Prostate gland (tissue), 2 donors: ENCODE measurements at regions of chr5 and their contacts with region 1.

Region 1: GRCh38 chr5:90529194-90529938 is at the start of gene LYSMD3:
- DNase-seq: peak; percentile 98
- H3K4me3 ChIP-seq: peak within 1 kb of the TSS; percentile 72 to 86
- H3K27ac ChIP-seq: peak within 1 kb of the TSS; percentile 89 to 92
- H3K4me1 ChIP-seq: no peaks in the 10 kb centered on the region
- H3K27me3 ChIP-seq: no peaks in the 10 kb centered on the region
- CTCF ChIP-seq: no peak
- POLR2A ChIP-seq: peak; percentile 95
- total RNA-seq, gene LYSMD3: 11.8 to 18.0 TPM

Region 2: DNA sequence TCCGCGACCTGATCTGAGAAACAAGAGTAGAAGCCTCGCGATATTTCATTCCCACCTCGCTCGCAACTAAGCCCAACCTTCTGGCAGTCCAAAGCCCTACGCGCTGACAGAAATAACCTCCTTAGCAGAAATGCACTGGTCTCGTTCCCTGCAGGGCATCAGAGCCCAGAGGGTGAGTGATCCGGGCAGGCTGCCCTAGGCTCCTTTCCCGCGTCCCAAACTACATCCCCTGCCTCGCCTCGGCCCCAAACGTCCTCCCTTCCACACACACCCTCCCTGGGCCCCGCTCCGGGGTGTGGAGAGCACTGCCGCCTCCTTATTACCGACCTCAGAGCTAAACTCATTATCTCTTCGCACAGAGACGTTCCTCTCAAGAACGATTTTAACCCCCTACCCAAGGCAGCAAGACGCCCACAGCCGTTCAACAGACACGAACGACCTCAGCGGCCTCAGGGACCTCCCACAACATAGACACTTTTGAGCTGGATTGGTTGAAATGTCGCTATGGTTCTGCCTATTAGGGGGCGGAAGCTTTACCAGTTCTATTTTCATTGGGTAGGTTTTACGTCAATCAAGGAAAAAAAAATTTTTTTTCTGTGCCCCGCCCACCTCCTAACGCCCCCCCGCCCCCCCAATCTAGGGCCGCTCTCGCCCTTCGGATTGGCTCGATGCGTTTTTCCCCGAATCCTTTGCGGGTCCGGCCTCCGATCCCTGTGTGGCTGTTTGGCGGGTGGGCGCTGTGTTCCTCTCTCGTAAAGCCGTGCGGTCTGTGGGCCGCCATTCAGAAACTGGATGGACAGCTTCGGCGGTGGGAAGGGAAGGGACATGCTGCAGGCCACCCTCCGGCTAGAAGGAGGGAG is 119.8 kb before region 1 on chr5 and contains the start of gene CETN3:
- intact Hi-C with region 1: loop called (anchors 10 kb)
- DNase-seq: peak; percentile 96
- H3K4me3 ChIP-seq: peak within 1 kb of the TSS; percentile 62 to 91
- H3K27ac ChIP-seq: peak within 1 kb of the TSS; percentile 91 to 98
- H3K4me1 ChIP-seq: no peaks in the 10 kb centered on the region
- H3K27me3 ChIP-seq: no peaks in the 10 kb centered on the region
- CTCF ChIP-seq: no peak
- POLR2A ChIP-seq: peak; percentile 87
- total RNA-seq, gene CETN3: 13.3 to 29.0 TPM

Region 3: GRCh38 chr5:90434116-90434714 is 95.2 kb before region 1 on chr5:
- intact Hi-C with region 1: loop called (anchors 1 kb)
- DNase-seq: peak; percentile 15
- H3K4me3 ChIP-seq: no peak overlapping the region
- H3K27ac ChIP-seq: no peak overlapping the region
- H3K4me1 ChIP-seq: no peaks in the 10 kb centered on the region
- H3K27me3 ChIP-seq: no peaks in the 10 kb centered on the region
- CTCF ChIP-seq: peak in 2 of 4 experiments; percentile 29 to 31
- POLR2A ChIP-seq: no peak

Region 4: GRCh38 chr5:90474235-90475109 is 54.9 kb before region 1 on chr5 and contains the starts of genes MBLAC2 and POLR3G:
- intact Hi-C with region 1: loop called (anchors 1 kb)
- DNase-seq: peak; percentile 94
- H3K4me3 ChIP-seq: peak within 1 kb of the TSS; percentile 71 to 88
- H3K27ac ChIP-seq: peak within 1 kb of the TSS; percentile 74 to 75
- H3K4me1 ChIP-seq: no peaks in the 10 kb centered on the region
- H3K27me3 ChIP-seq: no peaks in the 10 kb centered on the region
- CTCF ChIP-seq: peak in 3 of 4 experiments; percentile 28 to 63 (median 55)
- POLR2A ChIP-seq: peak; percentile 78
- total RNA-seq, gene MBLAC2: 3.9 to 12.9 TPM
- total RNA-seq, gene POLR3G: 0.18 to 6.4 TPM

Region 5: GRCh38 chr5:90747175-90747574 is 217.8 kb after region 1 on chr5:
- intact Hi-C with region 1: no loop called
- DNase-seq: no peak
- H3K4me3 ChIP-seq: no peak overlapping the region
- H3K27ac ChIP-seq: no peak overlapping the region
- H3K4me1 ChIP-seq: no peaks in the 10 kb centered on the region
- H3K27me3 ChIP-seq: no peaks in the 10 kb centered on the region
- CTCF ChIP-seq: no peak
- POLR2A ChIP-seq: no peak